ENCODE measurements at regions of chr1 and their contacts with region 1.

Region 1: GRCh38 chr1:21200767-21201166 is 24.1 kb upstream of the EIF4G3 start:
- DNase-seq: no peak
- H3K4me3 Mint-ChIP-seq: no peak overlapping the region
- H3K27ac Mint-ChIP-seq: no peak overlapping the region
- H3K4me1 Mint-ChIP-seq: no peaks in the 10 kb centered on the region
- H3K27me3 Mint-ChIP-seq: peaks cover 9% of the 10 kb centered on the region

Region 2: GRCh38 chr1:20696397-20697329 is 504.1 kb before region 1 on chr1:
- CTCF ChIA-PET with region 1: interaction called, 52 read pairs
- POLR2A ChIA-PET with region 1: no interaction called
- DNase-seq: peak; percentile 77
- H3K4me3 Mint-ChIP-seq: peak overlapping the region; percentile 79
- H3K27ac Mint-ChIP-seq: no peak overlapping the region
- H3K4me1 Mint-ChIP-seq: peaks cover 12% of the 10 kb centered on the region
- H3K27me3 Mint-ChIP-seq: peaks cover 9% of the 10 kb centered on the region

Region 3: GRCh38 chr1:20987831-20988825 is 212.6 kb before region 1 on chr1:
- CTCF ChIA-PET with region 1: interaction called, 10 read pairs
- POLR2A ChIA-PET with region 1: no interaction called
- DNase-seq: no peak
- H3K4me3 Mint-ChIP-seq: no peak overlapping the region
- H3K27ac Mint-ChIP-seq: no peak overlapping the region
- H3K4me1 Mint-ChIP-seq: peaks cover 22% of the 10 kb centered on the region
- H3K27me3 Mint-ChIP-seq: no peaks in the 10 kb centered on the region

Region 4: GRCh38 chr1:21184276-21184675 is 16.5 kb before region 1 on chr1:
- CTCF ChIA-PET with region 1: interaction called, 22 read pairs
- POLR2A ChIA-PET with region 1: no interaction called
- DNase-seq: no peak
- H3K4me3 Mint-ChIP-seq: no peak overlapping the region
- H3K27ac Mint-ChIP-seq: no peak overlapping the region
- H3K4me1 Mint-ChIP-seq: peaks cover 2% of the 10 kb centered on the region
- H3K27me3 Mint-ChIP-seq: peaks cover 9% of the 10 kb centered on the region

Region 5: DNA sequence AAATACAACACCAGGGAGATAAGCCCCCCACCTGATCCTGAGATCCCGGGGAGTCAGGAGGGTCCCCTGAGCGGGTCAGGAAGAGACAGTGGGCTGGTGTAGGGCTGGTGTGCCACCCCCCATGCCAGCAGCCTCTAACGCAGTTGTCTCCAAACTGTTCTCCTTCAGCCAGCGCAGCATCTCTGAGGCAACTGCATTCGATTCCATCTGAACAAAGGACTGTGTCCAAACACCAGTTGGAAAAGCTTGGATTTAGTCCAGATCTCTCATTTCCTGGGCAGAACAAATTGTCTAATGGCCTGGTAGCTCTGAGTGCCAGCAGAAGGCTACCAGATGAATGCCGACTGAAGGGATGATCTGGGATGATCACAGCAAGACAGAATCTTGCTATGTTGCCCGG is 20.0 kb after region 1 on chr1:
- CTCF ChIA-PET with region 1: no interaction called
- POLR2A ChIA-PET with region 1: no interaction called
- DNase-seq: no peak
- H3K4me3 Mint-ChIP-seq: no peak overlapping the region
- H3K27ac Mint-ChIP-seq: no peak overlapping the region
- H3K4me1 Mint-ChIP-seq: no peaks in the 10 kb centered on the region
- H3K27me3 Mint-ChIP-seq: no peaks in the 10 kb centered on the region

Region 6: GRCh38 chr1:21280011-21280471 is 79.3 kb after region 1 on chr1:
- CTCF ChIA-PET with region 1: no interaction called
- POLR2A ChIA-PET with region 1: no interaction called
- DNase-seq: peak; percentile 47
- H3K4me3 Mint-ChIP-seq: peak overlapping the region; percentile 71
- H3K27ac Mint-ChIP-seq: peak overlapping the region; percentile 93
- H3K4me1 Mint-ChIP-seq: peaks cover 58% of the 10 kb centered on the region
- H3K27me3 Mint-ChIP-seq: no peaks in the 10 kb centered on the region

Region 7: GRCh38 chr1:21508580-21509350 is 308.0 kb after region 1 on chr1:
- CTCF ChIA-PET with region 1: no interaction called
- POLR2A ChIA-PET with region 1: no interaction called
- DNase-seq: peak; percentile 56
- H3K4me3 Mint-ChIP-seq: no peak overlapping the region
- H3K27ac Mint-ChIP-seq: no peak overlapping the region
- H3K4me1 Mint-ChIP-seq: peaks cover 4% of the 10 kb centered on the region
- H3K27me3 Mint-ChIP-seq: peaks cover 46% of the 10 kb centered on the region

Measured in activated CD4-positive, alpha-beta memory T cell treated with anti-CD3 and anti-CD28 coated beads, Interleukin-2, amount 10 ng/mL, durations not matched to agents 7 days and 5 days (primary cell).